GM23248 (cell line): ENCODE measurements at regions of chr5 and their contacts with region 1.

Region 1: DNA sequence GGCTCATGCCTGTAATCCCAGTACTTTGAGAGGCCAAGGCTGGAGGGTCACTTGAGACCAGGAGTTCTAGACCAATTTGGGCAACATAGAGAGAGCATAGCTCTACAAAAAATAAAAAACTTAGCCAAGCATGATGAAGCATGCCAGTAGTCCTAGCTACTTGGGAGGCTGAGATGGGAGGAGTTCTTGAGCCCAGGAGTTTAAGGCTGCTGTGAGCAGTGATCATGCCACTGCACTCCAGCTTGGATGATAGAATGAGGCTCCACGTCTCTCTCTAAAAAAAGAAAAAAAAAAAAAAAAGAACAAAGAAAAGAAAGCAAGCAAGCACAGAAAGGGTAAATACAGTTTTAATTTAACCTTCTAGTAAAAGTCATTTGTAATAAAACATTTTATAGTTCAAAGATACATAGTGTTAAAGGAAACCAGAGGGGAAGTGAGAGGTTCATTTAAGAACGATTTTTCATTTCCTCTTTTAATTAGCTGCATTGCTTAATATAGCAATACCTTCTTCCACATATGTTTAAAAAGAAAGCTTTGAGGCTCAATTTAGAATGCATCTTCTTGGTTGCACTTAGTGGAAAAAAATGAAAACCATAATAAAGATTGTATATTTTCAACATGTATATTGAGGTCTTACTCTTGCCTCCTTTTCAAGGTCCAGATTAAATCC is 14.9 kb downstream of the GAPT start:
- DNase-seq: no peak
- H3K4me3 ChIP-seq: no peak overlapping the region
- H3K27ac ChIP-seq: no peak overlapping the region
- H3K4me1 ChIP-seq: no peaks in the 10 kb centered on the region
- H3K27me3 ChIP-seq: 0 out of 2 replicates have a peak, but pooled peaks cover 11% of the 10 kb centered on the region

Region 2: GRCh38 chr5:58156385-58156784 is 349.7 kb before region 1 on chr5:
- in situ Hi-C with region 1: no loop called
- DNase-seq: peak; percentile 79
- H3K4me3 ChIP-seq: no peak overlapping the region
- H3K27ac ChIP-seq: no peak overlapping the region
- H3K4me1 ChIP-seq: peaks cover 10% of the 10 kb centered on the region; the same call in 1 of the 2 replicates
- H3K27me3 ChIP-seq: no peaks in the 10 kb centered on the region

Region 3: GRCh38 chr5:58738336-58738735 is 232.2 kb after region 1 on chr5:
- in situ Hi-C with region 1: no loop called
- DNase-seq: no peak
- H3K4me3 ChIP-seq: no peak overlapping the region
- H3K27ac ChIP-seq: no peak overlapping the region
- H3K4me1 ChIP-seq: no peaks in the 10 kb centered on the region
- H3K27me3 ChIP-seq: no peaks in the 10 kb centered on the region

Region 4: GRCh38 chr5:58849921-58850667 is 344.0 kb after region 1 on chr5:
- in situ Hi-C with region 1: loop called (anchors 25 kb)
- DNase-seq: peak; percentile 56
- H3K4me3 ChIP-seq: no peak overlapping the region
- H3K27ac ChIP-seq: no peak overlapping the region
- H3K4me1 ChIP-seq: no peaks in the 10 kb centered on the region
- H3K27me3 ChIP-seq: peaks cover 38% of the 10 kb centered on the region